ENCODE measurements at regions of chr19 and their contacts with region 1.

Region 1: GRCh38 chr19:19488875-19489690 is 26.3 kb downstream of the TSSK6 start:
- DNase-seq: peak; percentile 63 to 97 (median 94)
- ATAC-seq: peak; percentile 90
- H3K4me3 ChIP-seq: peak overlapping the region; percentile 22
- H3K4me3 Mint-ChIP-seq: peak overlapping the region; percentile 58 to 84 (median 78)
- H3K27ac ChIP-seq: peak overlapping the region; percentile 81
- H3K27ac Mint-ChIP-seq: peak overlapping the region; percentile 96 to 99 (median 99)
- H3K4me1 ChIP-seq: peaks cover 33 to 51% of the 10 kb centered on the region in 2 donors
- H3K4me1 Mint-ChIP-seq: peaks cover 27 to 61% (median 52%) of the 10 kb centered on the region in 7 donors
- H3K27me3 ChIP-seq: no peaks in the 10 kb centered on the region
- H3K27me3 Mint-ChIP-seq: no peaks in the 10 kb centered on the region

Region 2: GRCh38 chr19:19063183-19064097 is 425.6 kb before region 1 on chr19 and contains the start of gene SLC25A42:
- CTCF ChIA-PET with region 1: no interaction called
- POLR2A ChIA-PET with region 1: interaction called, 3 read pairs
- intact Hi-C with region 1: loop called (anchors 5 to 10 kb)
- DNase-seq: peak; percentile 93 to 100 (median 99)
- ATAC-seq: peak; percentile 95
- H3K4me3 ChIP-seq: peak within 1 kb of the TSS; percentile 82
- H3K4me3 Mint-ChIP-seq: peak within 1 kb of the TSS; percentile 83 to 99 (median 92)
- H3K27ac ChIP-seq: peak within 1 kb of the TSS; percentile 83
- H3K27ac Mint-ChIP-seq: peak within 1 kb of the TSS; percentile 75 to 98 (median 83)
- H3K4me1 ChIP-seq: peaks cover 11 to 15% of the 10 kb centered on the region in 2 donors
- H3K4me1 Mint-ChIP-seq: peaks cover 5 to 41% (median 35%) of the 10 kb centered on the region in 7 donors
- H3K27me3 ChIP-seq: no peaks in the 10 kb centered on the region
- H3K27me3 Mint-ChIP-seq: no peaks in the 10 kb centered on the region
- total RNA-seq, gene SLC25A42: 19.0 to 36.1 (median 21.6) TPM

Region 3: GRCh38 chr19:19203012-19203856 is 285.8 kb before region 1 on chr19 and contains the start of gene NR2C2AP:
- CTCF ChIA-PET with region 1: no interaction called
- POLR2A ChIA-PET with region 1: no interaction called
- intact Hi-C with region 1: loop called in 1 of 2 experiments (anchors 1 kb)
- DNase-seq: peak; percentile 80 to 94 (median 89)
- ATAC-seq: peak; percentile 95
- H3K4me3 ChIP-seq: peak within 1 kb of the TSS; percentile 95
- H3K4me3 Mint-ChIP-seq: peak within 1 kb of the TSS; percentile 90 to 94 (median 92)
- H3K27ac ChIP-seq: peak within 1 kb of the TSS; percentile 89
- H3K27ac Mint-ChIP-seq: peak within 1 kb of the TSS; percentile 88 to 96 (median 93)
- H3K4me1 ChIP-seq: peaks cover 23% of the 10 kb centered on the region in 2 donors
- H3K4me1 Mint-ChIP-seq: peaks cover 22 to 36% (median 30%) of the 10 kb centered on the region in 7 donors
- H3K27me3 ChIP-seq: no peaks in the 10 kb centered on the region
- H3K27me3 Mint-ChIP-seq: peaks cover 0 to 12% (median 0%) of the 10 kb centered on the region in 5 donors
- total RNA-seq, gene NR2C2AP: 13.8 to 33.4 (median 28.7) TPM

Region 4: DNA sequence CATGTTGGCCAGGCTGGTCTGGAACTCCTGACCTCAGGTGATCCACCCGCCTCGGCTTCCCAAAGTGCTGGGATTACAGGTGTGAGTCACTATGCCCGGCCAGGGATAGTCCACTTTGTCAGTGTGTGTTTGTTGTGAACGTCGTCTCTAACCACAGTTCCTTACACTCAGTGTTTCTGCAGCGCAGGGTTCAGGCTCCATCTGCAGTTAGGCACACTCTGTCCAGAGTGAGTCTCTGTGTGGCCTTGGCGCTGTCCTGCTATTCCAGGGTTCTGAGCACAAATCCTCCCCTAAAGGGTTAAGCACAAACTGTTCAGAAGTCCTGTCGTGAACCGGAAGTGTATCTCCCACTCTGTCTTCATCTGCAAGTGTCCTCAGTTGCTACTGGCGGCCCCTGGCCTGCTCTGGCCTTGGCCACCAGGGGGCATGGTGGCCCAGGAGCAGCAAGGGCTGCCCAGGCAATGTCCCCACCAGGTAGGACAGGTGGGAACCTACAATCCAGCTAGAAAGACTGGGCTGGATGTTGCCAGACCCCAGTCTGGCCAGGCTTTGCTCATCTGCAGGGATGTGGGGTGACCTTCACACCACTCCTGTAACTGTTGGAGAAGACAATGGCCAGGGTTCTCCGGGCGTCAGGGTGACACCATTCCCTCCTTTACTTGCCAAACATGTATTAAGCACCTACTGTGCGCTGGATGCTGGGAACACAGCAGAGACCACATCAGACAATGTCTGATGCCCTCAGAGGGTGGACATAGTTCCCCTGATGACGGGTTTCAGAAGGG is 122.3 kb before region 1 on chr19:
- CTCF ChIA-PET with region 1: interaction called, 94 read pairs
- POLR2A ChIA-PET with region 1: interaction called, 101 read pairs
- intact Hi-C with region 1: loop called (anchors 1 kb)
- DNase-seq: peak; percentile 49 to 76 (median 70)
- ATAC-seq: peak; percentile 83
- H3K4me3 ChIP-seq: no peak overlapping the region
- H3K4me3 Mint-ChIP-seq: peak overlapping the region; percentile 21 to 66 (median 54)
- H3K27ac ChIP-seq: peak overlapping the region; percentile 22
- H3K27ac Mint-ChIP-seq: peak overlapping the region; percentile 37 to 91 (median 81)
- H3K4me1 ChIP-seq: peaks cover 14 to 15% of the 10 kb centered on the region in 2 donors
- H3K4me1 Mint-ChIP-seq: peaks cover 11 to 26% (median 19%) of the 10 kb centered on the region in 7 donors
- H3K27me3 ChIP-seq: no peaks in the 10 kb centered on the region
- H3K27me3 Mint-ChIP-seq: no peaks in the 10 kb centered on the region

Region 5: GRCh38 chr19:19444681-19445155 is 44.4 kb before region 1 on chr19:
- CTCF ChIA-PET with region 1: interaction called, 8 read pairs
- POLR2A ChIA-PET with region 1: interaction called, 10 read pairs
- intact Hi-C with region 1: loop called (anchors 2 kb)
- DNase-seq: no peak
- ATAC-seq: peak; percentile 37
- H3K4me3 ChIP-seq: no peak overlapping the region
- H3K4me3 Mint-ChIP-seq: peak overlapping the region in 8 of 10 donors; percentile 7 to 66 (median 51)
- H3K27ac ChIP-seq: peak overlapping the region; percentile 49
- H3K27ac Mint-ChIP-seq: peak overlapping the region; percentile 38 to 92 (median 83)
- H3K4me1 ChIP-seq: peaks cover 50 to 60% of the 10 kb centered on the region in 2 donors
- H3K4me1 Mint-ChIP-seq: peaks cover 57 to 84% (median 74%) of the 10 kb centered on the region in 7 donors
- H3K27me3 ChIP-seq: no peaks in the 10 kb centered on the region
- H3K27me3 Mint-ChIP-seq: no peaks in the 10 kb centered on the region

Region 6: GRCh38 chr19:19515764-19516519 is 26.9 kb after region 1 on chr19 and contains the start of gene NDUFA13:
- CTCF ChIA-PET with region 1: interaction called, 3 read pairs
- POLR2A ChIA-PET with region 1: interaction called, 10 read pairs
- intact Hi-C with region 1: loop called (anchors 1 kb)
- DNase-seq: peak; percentile 88 to 98 (median 92)
- ATAC-seq: peak; percentile 96
- H3K4me3 ChIP-seq: peak within 1 kb of the TSS; percentile 96
- H3K4me3 Mint-ChIP-seq: peak within 1 kb of the TSS; percentile 89 to 98 (median 95)
- H3K27ac ChIP-seq: peak within 1 kb of the TSS; percentile 83
- H3K27ac Mint-ChIP-seq: peak within 1 kb of the TSS; percentile 89 to 98 (median 96)
- H3K4me1 ChIP-seq: peaks cover 13 to 14% of the 10 kb centered on the region in 2 donors
- H3K4me1 Mint-ChIP-seq: peaks cover 16 to 42% (median 27%) of the 10 kb centered on the region in 7 donors
- H3K27me3 ChIP-seq: no peaks in the 10 kb centered on the region
- H3K27me3 Mint-ChIP-seq: no peaks in the 10 kb centered on the region
- total RNA-seq, gene NDUFA13: 172 to 362 (median 176) TPM

Measured in naive thymus-derived CD4-positive, alpha-beta T cell (primary cell).